ENCODE measurements at regions of chr19 and their contacts with region 1.

Region 1: GRCh38 chr19:33416307-33417215 is 43.1 kb downstream of the CEBPG start:
- DNase-seq: peak; percentile 85
- CTCF ChIP-seq: peak; percentile 65

Region 2: GRCh38 chr19:33235269-33235995 is 181.1 kb before region 1 on chr19:
- CTCF ChIA-PET with region 1: interaction called, 12 read pairs
- POLR2A ChIA-PET with region 1: no interaction called
- DNase-seq: peak; percentile 91
- CTCF ChIP-seq: peak; percentile 82

Region 3: DNA sequence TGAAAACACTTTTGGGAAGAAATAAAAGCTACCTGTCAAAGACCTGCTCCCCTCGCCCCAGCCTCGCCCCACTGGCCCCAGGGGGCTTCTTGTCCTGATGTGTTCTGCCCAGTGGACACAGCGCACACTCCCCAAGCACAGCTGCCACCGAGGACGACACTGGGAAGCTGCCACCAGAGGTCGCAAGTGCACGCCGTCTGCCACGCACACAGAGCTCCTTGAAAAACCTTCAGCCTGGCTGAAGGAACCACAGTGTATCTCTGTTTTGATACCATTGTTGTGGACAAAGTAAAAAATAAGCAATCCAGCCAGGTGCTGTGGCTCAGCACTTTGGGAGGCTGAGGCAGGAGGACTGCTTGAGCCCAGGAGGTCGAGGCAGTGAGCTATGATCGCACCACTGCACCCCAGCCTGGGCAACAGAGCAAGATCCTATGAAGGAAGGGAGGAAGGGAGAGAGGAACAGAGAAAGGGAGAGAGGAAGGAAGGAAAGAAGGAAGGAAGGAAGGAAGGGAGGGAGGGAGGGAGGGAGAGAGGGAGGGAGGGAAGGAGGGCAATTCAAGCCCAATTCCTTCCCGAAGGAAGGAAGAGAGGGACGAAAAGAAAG is 14.2 kb after region 1 on chr19:
- CTCF ChIA-PET with region 1: interaction called, 58 read pairs
- POLR2A ChIA-PET with region 1: no interaction called
- DNase-seq: peak; percentile 75
- CTCF ChIP-seq: peak; percentile 93

Measured in GM10248 (cell line).